K562 (cell line): ENCODE measurements at regions of chr6 and their contacts with region 1.

Region 1: DNA sequence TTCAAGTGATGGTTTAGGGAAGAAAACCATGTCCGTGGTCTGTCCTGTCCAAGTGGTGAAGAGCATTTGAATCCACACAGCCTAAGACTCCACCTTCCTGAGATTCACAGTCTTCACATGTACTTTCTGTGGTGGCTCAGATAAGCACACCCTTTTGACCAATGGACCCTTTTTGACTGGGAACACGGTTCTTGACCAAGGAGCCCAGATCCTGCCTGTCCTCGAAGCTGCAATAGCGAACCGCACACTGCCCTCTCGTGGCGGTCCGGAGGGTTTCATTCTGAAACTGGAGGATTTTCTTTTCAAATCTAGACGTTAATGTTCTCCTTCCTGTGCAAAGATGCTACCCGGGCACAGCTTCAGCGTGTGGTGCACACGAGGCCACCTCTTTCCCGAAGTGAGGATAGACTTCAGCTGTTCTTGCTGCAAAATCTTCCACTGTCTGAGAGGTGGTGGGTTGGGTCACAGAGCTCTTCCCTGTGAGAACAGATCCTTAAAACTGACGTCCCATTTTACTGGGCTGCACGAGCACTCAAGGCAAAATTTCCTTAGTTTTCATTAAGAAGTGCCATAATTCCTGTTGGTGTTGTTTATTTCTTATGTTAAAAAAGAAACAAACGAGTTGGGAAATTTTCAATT is 90.5 kb downstream of the SYNJ2 start:
- DNase-seq: peak; percentile 84 to 87 (median 86)
- ATAC-seq: peak; percentile 95
- H3K4me3 ChIP-seq: no peak overlapping the region
- H3K27ac ChIP-seq: no peak overlapping the region; the same call in 2 of the 3 replicates
- H3K4me1 ChIP-seq: peaks cover 4 to 15% of the 10 kb centered on the region in 2 experiments; a peak in 4 of 5 replicates
- H3K27me3 ChIP-seq: no peaks in the 10 kb centered on the region
- CTCF ChIP-seq: peak; percentile 86 to 98 (median 96)
- EP300 ChIP-seq: peak; percentile 48; the same call in 1 of the 2 replicates
- POLR2A ChIP-seq: no peak
- RAD21 ChIP-seq: peak; percentile 96 to 98

Region 2: GRCh38 chr6:158026054-158026900 is 45.9 kb before region 1 on chr6:
- CTCF ChIA-PET with region 1: no interaction called
- POLR2A ChIA-PET with region 1: no interaction called
- in situ Hi-C with region 1: no loop called
- intact Hi-C with region 1: loop called (anchors 5 kb)
- DNase-seq: peak; percentile 72 to 84 (median 78)
- ATAC-seq: peak; percentile 93
- H3K4me3 ChIP-seq: no peak overlapping the region
- H3K27ac ChIP-seq: peak overlapping the region; percentile 15; the same call in 1 of the 3 replicates
- H3K4me1 ChIP-seq: peaks cover 24 to 44% of the 10 kb centered on the region in 2 experiments
- H3K27me3 ChIP-seq: no peaks in the 10 kb centered on the region
- CTCF ChIP-seq: peak; percentile 71 to 85 (median 75)
- EP300 ChIP-seq: no peak
- POLR2A ChIP-seq: no peak
- RAD21 ChIP-seq: peak; percentile 26 to 44; a peak in 3 of 4 replicates